ENCODE measurements at regions of chr22 and their contacts with region 1.

Region 1: DNA sequence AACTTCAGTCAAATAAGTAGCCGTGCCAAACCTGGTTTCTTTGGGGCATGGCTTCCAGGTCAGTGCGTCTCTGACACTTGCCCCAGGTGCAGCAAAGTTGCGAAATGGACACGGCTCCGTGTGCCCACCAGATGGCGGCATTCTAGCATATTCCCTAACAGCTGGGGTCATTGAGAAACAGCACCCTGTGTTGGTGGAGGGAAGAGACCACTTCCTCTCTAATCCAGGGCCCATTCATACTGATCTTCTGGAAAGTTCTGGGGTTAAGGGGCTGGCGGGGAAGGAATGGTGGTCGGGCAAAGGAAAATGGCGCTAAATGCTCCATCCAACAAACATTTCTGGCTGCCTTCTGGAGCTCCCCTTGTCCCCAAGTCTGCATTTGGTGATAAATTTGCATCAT is 141.2 kb upstream of the TIMP3 start:
- DNase-seq: peak; percentile 67
- H3K4me3 ChIP-seq: no peak overlapping the region
- H3K27ac ChIP-seq: no peak overlapping the region
- H3K4me1 ChIP-seq: no peaks in the 10 kb centered on the region
- H3K27me3 ChIP-seq: peaks cover 4% of the 10 kb centered on the region
- CTCF ChIP-seq: peak; percentile 82

Region 2: GRCh38 chr22:32796865-32797573 is 136.7 kb after region 1 on chr22:
- CTCF ChIA-PET with region 1: interaction called, 28 read pairs
- POLR2A ChIA-PET with region 1: no interaction called
- intact Hi-C with region 1: loop called (anchors 1 kb)
- DNase-seq: peak; percentile 68
- H3K4me3 ChIP-seq: no peak overlapping the region
- H3K27ac ChIP-seq: no peak overlapping the region
- H3K4me1 ChIP-seq: no peaks in the 10 kb centered on the region
- H3K27me3 ChIP-seq: peaks cover 27% of the 10 kb centered on the region
- CTCF ChIP-seq: peak; percentile 94

Region 3: DNA sequence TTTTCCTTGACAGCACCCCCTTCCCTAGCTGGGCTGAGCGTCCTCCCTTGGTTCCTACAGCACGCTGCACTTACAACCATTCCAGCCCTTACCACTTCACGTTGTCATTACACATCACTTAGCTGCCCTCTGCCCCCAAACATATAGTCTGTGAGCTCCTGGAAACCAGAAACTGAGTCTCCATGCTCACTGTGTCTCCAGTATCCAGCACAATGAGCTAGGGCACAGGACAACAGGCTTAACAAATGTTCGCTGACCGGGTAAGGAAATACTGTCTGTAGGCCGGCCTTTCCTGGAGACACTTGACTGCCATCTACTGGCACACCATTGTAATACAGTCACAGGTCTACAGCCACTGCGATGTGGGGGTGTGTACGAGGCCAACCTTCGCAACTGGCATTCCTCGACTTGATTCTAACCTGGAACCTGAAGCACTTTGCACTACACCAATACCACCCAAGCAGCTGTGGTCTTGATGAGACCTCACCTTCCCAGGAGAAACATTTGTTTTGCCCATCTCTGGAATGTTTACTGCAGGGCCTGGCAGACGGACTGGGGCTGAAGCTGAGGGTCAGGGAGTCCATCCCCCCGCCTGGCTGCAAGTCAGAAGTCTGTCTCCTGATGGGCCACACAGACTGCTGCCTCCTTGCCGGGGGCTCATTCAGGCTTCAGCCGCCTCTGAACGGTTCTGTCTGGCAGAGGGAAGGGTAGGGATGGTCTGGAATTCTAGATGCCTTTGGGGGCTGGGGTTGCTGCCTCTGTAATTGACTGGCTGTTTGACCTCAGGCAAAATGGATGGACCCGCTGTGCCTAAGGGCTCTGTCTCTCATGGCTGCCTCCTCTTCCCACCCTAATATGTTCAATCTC is 325.8 kb after region 1 on chr22:
- CTCF ChIA-PET with region 1: interaction called, 3 read pairs
- POLR2A ChIA-PET with region 1: no interaction called
- intact Hi-C with region 1: loop called (anchors 5 kb)
- DNase-seq: peak; percentile 74
- H3K4me3 ChIP-seq: no peak overlapping the region
- H3K27ac ChIP-seq: peak overlapping the region; percentile 57
- H3K4me1 ChIP-seq: peaks cover 16% of the 10 kb centered on the region
- H3K27me3 ChIP-seq: no peaks in the 10 kb centered on the region
- CTCF ChIP-seq: peak; percentile 82

Region 4: GRCh38 chr22:33000342-33001280 is 340.3 kb after region 1 on chr22:
- CTCF ChIA-PET with region 1: interaction called, 5 read pairs
- POLR2A ChIA-PET with region 1: no interaction called
- intact Hi-C with region 1: loop called (anchors 5 kb)
- DNase-seq: peak; percentile 84
- H3K4me3 ChIP-seq: no peak overlapping the region
- H3K27ac ChIP-seq: no peak overlapping the region
- H3K4me1 ChIP-seq: peaks cover 6% of the 10 kb centered on the region
- H3K27me3 ChIP-seq: no peaks in the 10 kb centered on the region
- CTCF ChIP-seq: peak; percentile 92

Region 5: GRCh38 chr22:33209930-33210784 is 549.9 kb after region 1 on chr22:
- CTCF ChIA-PET with region 1: no interaction called
- POLR2A ChIA-PET with region 1: no interaction called
- intact Hi-C with region 1: loop called (anchors 5 kb)
- DNase-seq: peak; percentile 56
- H3K4me3 ChIP-seq: no peak overlapping the region
- H3K27ac ChIP-seq: no peak overlapping the region
- H3K4me1 ChIP-seq: no peaks in the 10 kb centered on the region
- H3K27me3 ChIP-seq: peaks cover 9% of the 10 kb centered on the region
- CTCF ChIP-seq: peak; percentile 70

Measured in A673 (cell line).